ENCODE measurements at regions of chr15 and their contacts with region 1.

Region 1: GRCh38 chr15:78108299-78109084 is 16.1 kb downstream of the SH2D7 start:
- DNase-seq: peak; percentile 77 to 92 (median 82)
- H3K4me3 ChIP-seq: no peak overlapping the region
- H3K27ac ChIP-seq: no peak overlapping the region
- H3K4me1 ChIP-seq: peaks cover 0 to 4% (median 0%) of the 10 kb centered on the region in 3 donors
- H3K27me3 ChIP-seq: no peaks in the 10 kb centered on the region
- CTCF ChIP-seq: peak; percentile 92

Region 2: GRCh38 chr15:77966540-77967290 is 141.8 kb before region 1 on chr15:
- intact Hi-C with region 1: loop called (anchors 5 kb)
- DNase-seq: peak in 1 of 5 donors; percentile 46
- H3K4me3 ChIP-seq: no peak overlapping the region
- H3K27ac ChIP-seq: no peak overlapping the region
- H3K4me1 ChIP-seq: no peaks in the 10 kb centered on the region
- H3K27me3 ChIP-seq: no peaks in the 10 kb centered on the region
- CTCF ChIP-seq: peak; percentile 73

Region 3: DNA sequence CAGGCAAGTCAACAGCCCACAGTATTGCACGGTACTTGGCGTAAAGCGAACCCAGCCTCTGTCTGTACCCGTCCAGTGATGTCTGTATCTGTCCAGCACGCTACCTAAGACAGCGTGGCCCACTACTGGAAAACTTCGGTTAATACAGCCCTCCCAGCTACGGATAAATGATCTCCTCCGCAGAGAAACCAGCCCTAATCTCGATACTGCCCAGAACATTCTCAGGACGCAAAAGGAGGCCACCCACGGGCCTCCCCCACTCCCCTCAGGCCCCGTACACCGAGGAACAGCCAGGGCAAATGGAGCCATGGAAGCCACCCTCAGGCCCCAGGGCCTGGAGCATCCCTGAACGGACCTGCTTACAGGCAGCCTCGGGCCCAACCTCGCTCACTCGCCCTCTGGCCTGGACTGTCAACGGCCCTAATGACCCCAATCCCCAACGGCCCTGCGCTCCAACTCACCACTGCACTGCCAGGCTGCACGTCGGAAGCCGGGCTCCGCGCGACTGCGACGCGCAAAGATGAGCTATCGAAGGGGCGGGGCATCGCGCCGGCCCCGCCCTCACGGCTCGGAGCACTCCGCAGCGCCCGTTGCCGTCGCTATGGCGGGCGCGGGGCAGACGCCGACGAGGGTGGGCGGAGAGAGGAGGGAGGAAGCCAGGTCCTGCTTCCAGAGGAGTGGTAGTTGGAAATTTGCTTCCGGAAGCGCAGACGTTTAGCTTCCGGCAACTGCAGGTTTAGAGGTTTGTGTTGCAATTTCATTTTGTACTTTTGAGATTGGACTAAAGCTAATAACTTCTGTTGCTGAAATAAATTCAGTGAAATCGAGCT is 190.8 kb after region 1 on chr15 and contains the start of gene SKIC8:
- intact Hi-C with region 1: no loop called
- DNase-seq: peak; percentile 96 to 98 (median 97)
- H3K4me3 ChIP-seq: peak within 1 kb of the TSS; percentile 91 to 94 (median 92)
- H3K27ac ChIP-seq: peak within 1 kb of the TSS; percentile 47 to 66
- H3K4me1 ChIP-seq: no peaks in the 10 kb centered on the region
- H3K27me3 ChIP-seq: no peaks in the 10 kb centered on the region
- CTCF ChIP-seq: no peak
- total RNA-seq, gene SKIC8: 48.5 TPM